Vagina (tissue), 2 donors: ENCODE measurements at regions of chr6 and their contacts with region 1.

Region 1: GRCh38 chr6:23228439-23229024 is 659.2 kb downstream of the HDGFL1 start:
- DNase-seq: no peak
- H3K4me3 ChIP-seq: no peak overlapping the region
- H3K27ac ChIP-seq: no peak overlapping the region
- H3K4me1 ChIP-seq: no peaks in the 10 kb centered on the region
- H3K27me3 ChIP-seq: no peaks in the 10 kb centered on the region
- CTCF ChIP-seq: no peak
- POLR2A ChIP-seq: no peak

Region 2: DNA sequence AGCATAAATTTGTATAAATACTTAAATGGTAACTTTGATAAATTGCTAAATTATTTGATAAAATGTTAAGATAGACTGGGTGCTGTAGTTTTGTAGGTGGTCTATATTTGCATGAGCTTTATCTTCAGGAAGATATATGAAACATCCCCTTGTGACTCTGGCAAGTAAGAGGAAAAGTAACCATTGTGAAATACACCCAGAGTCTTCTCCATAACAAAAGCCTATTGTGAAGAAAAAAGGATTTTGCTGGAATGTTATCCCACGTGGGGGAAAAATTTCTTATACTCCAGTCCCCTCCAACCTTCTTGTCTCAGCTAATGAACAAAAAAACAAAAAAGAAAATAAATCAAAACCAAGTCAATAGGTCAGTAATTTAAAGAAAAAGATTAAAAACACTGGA is 58.5 kb before region 1 on chr6:
- intact Hi-C with region 1: no loop called
- DNase-seq: no peak
- H3K4me3 ChIP-seq: no peak overlapping the region
- H3K27ac ChIP-seq: no peak overlapping the region
- H3K4me1 ChIP-seq: no peaks in the 10 kb centered on the region
- H3K27me3 ChIP-seq: no peaks in the 10 kb centered on the region
- CTCF ChIP-seq: no peak
- POLR2A ChIP-seq: no peak

Region 3: GRCh38 chr6:23797041-23797440 is 568.5 kb after region 1 on chr6:
- intact Hi-C with region 1: loop called (anchors 5 kb)
- DNase-seq: no peak
- H3K4me3 ChIP-seq: no peak overlapping the region
- H3K27ac ChIP-seq: no peak overlapping the region
- H3K4me1 ChIP-seq: no peaks in the 10 kb centered on the region
- H3K27me3 ChIP-seq: no peaks in the 10 kb centered on the region
- CTCF ChIP-seq: no peak
- POLR2A ChIP-seq: no peak